ENCODE measurements at regions of chr9 and their contacts with region 1.

Region 1: GRCh38 chr9:131627648-131628458 is 82.5 kb downstream of the PRRT1B start:
- DNase-seq: peak; percentile 73 to 92
- ATAC-seq: peak; percentile 82 to 88 (median 83)
- H3K4me3 ChIP-seq: peak overlapping the region; percentile 13
- H3K4me3 Mint-ChIP-seq: peak overlapping the region; percentile 75
- H3K27ac ChIP-seq: peak overlapping the region; percentile 97
- H3K27ac Mint-ChIP-seq: peak overlapping the region; percentile 95 to 98
- H3K4me1 ChIP-seq: peaks cover 85% of the 10 kb centered on the region
- H3K4me1 Mint-ChIP-seq: peaks cover 36 to 61% of the 10 kb centered on the region in 2 donors
- H3K27me3 ChIP-seq: no peaks in the 10 kb centered on the region
- H3K27me3 Mint-ChIP-seq: no peaks in the 10 kb centered on the region
- CTCF ChIP-seq: no peak

Region 2: GRCh38 chr9:131585375-131585774 is 42.5 kb before region 1 on chr9:
- intact Hi-C with region 1: loop called (anchors 1 kb)
- DNase-seq: peak; percentile 44 to 84
- ATAC-seq: peak; percentile 87 to 88 (median 87)
- H3K4me3 ChIP-seq: no peak overlapping the region
- H3K4me3 Mint-ChIP-seq: peak overlapping the region; percentile 82
- H3K27ac ChIP-seq: peak overlapping the region; percentile 58
- H3K27ac Mint-ChIP-seq: peak overlapping the region; percentile 90
- H3K4me1 ChIP-seq: peaks cover 47% of the 10 kb centered on the region
- H3K4me1 Mint-ChIP-seq: peaks cover 40 to 59% of the 10 kb centered on the region in 2 donors
- H3K27me3 ChIP-seq: no peaks in the 10 kb centered on the region
- H3K27me3 Mint-ChIP-seq: no peaks in the 10 kb centered on the region
- CTCF ChIP-seq: no peak

Region 3: GRCh38 chr9:131645078-131645776 is 17.4 kb after region 1 on chr9:
- intact Hi-C with region 1: loop called (anchors 1 kb)
- DNase-seq: peak; percentile 42 to 47
- ATAC-seq: peak; percentile 83 to 87 (median 86)
- H3K4me3 ChIP-seq: no peak overlapping the region
- H3K4me3 Mint-ChIP-seq: peak overlapping the region; percentile 61
- H3K27ac ChIP-seq: peak overlapping the region; percentile 30
- H3K27ac Mint-ChIP-seq: peak overlapping the region; percentile 82 to 91
- H3K4me1 ChIP-seq: peaks cover 31% of the 10 kb centered on the region
- H3K4me1 Mint-ChIP-seq: peaks cover 44 to 52% of the 10 kb centered on the region in 2 donors
- H3K27me3 ChIP-seq: no peaks in the 10 kb centered on the region
- H3K27me3 Mint-ChIP-seq: no peaks in the 10 kb centered on the region
- CTCF ChIP-seq: no peak

Region 4: GRCh38 chr9:131668439-131669268 is 40.8 kb after region 1 on chr9:
- intact Hi-C with region 1: loop called (anchors 1 kb)
- DNase-seq: peak; percentile 72 to 85
- ATAC-seq: peak; percentile 67 to 77 (median 72)
- H3K4me3 ChIP-seq: no peak overlapping the region
- H3K4me3 Mint-ChIP-seq: peak overlapping the region; percentile 66
- H3K27ac ChIP-seq: peak overlapping the region; percentile 92
- H3K27ac Mint-ChIP-seq: peak overlapping the region; percentile 98 to 99
- H3K4me1 ChIP-seq: peaks cover 84% of the 10 kb centered on the region
- H3K4me1 Mint-ChIP-seq: peaks cover 89 to 90% of the 10 kb centered on the region in 2 donors
- H3K27me3 ChIP-seq: no peaks in the 10 kb centered on the region
- H3K27me3 Mint-ChIP-seq: no peaks in the 10 kb centered on the region
- CTCF ChIP-seq: no peak

Region 5: GRCh38 chr9:131678499-131679111 is 50.8 kb after region 1 on chr9:
- intact Hi-C with region 1: loop called (anchors 2 kb)
- DNase-seq: peak; percentile 75 to 83
- ATAC-seq: peak; percentile 93 to 97 (median 97)
- H3K4me3 ChIP-seq: no peak overlapping the region
- H3K4me3 Mint-ChIP-seq: peak overlapping the region; percentile 86
- H3K27ac ChIP-seq: peak overlapping the region; percentile 89
- H3K27ac Mint-ChIP-seq: peak overlapping the region; percentile 99 to 100
- H3K4me1 ChIP-seq: peaks cover 54% of the 10 kb centered on the region
- H3K4me1 Mint-ChIP-seq: peaks cover 83 to 93% of the 10 kb centered on the region in 2 donors
- H3K27me3 ChIP-seq: no peaks in the 10 kb centered on the region
- H3K27me3 Mint-ChIP-seq: no peaks in the 10 kb centered on the region
- CTCF ChIP-seq: no peak

Region 6: DNA sequence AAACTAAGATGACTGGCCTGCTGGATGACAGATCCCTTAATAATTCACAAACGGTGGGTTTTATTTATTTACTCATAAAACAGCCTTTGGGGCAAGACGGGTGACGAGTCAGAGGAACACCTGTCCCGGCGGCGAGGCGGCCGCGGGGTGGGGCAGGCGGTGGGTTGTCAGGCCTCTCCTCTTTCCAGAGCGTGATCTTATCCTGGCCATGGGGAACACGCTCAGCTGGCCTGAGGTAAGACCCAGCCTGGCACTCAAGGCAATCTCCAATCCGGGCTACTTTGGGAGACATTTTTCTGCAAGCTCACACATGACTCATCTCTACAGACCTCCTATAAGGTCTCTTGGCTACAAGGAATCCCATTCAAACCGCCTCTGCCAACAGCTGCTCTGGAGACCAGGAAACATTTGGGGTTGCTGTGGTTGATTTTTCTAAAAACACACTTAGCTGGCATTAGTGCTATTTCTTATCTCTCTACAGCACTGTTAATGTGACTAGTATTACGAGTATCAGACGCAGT is 105.7 kb after region 1 on chr9:
- intact Hi-C with region 1: loop called (anchors 2 kb)
- DNase-seq: peak; percentile 52 to 75
- ATAC-seq: peak in 2 of 3 donors; percentile 6 to 21
- H3K4me3 ChIP-seq: peak overlapping the region; percentile 4
- H3K4me3 Mint-ChIP-seq: peak overlapping the region; percentile 82
- H3K27ac ChIP-seq: peak overlapping the region; percentile 93
- H3K27ac Mint-ChIP-seq: peak overlapping the region; percentile 92 to 95
- H3K4me1 ChIP-seq: peaks cover 99% of the 10 kb centered on the region
- H3K4me1 Mint-ChIP-seq: peaks cover 84 to 87% of the 10 kb centered on the region in 2 donors
- H3K27me3 ChIP-seq: no peaks in the 10 kb centered on the region
- H3K27me3 Mint-ChIP-seq: no peaks in the 10 kb centered on the region
- CTCF ChIP-seq: no peak

Region 7: GRCh38 chr9:131762356-131762932 is 134.6 kb after region 1 on chr9:
- intact Hi-C with region 1: no loop called
- DNase-seq: peak; percentile 77 to 88
- ATAC-seq: peak; percentile 89 to 99 (median 99)
- H3K4me3 ChIP-seq: no peak overlapping the region
- H3K4me3 Mint-ChIP-seq: no peak overlapping the region
- H3K27ac ChIP-seq: no peak overlapping the region
- H3K27ac Mint-ChIP-seq: no peak overlapping the region
- H3K4me1 ChIP-seq: peaks cover 7% of the 10 kb centered on the region
- H3K4me1 Mint-ChIP-seq: peaks cover 0 to 6% of the 10 kb centered on the region in 2 donors
- H3K27me3 ChIP-seq: no peaks in the 10 kb centered on the region
- H3K27me3 Mint-ChIP-seq: peaks cover 14 to 26% of the 10 kb centered on the region in 2 donors
- CTCF ChIP-seq: peak; percentile 98

Region 8: DNA sequence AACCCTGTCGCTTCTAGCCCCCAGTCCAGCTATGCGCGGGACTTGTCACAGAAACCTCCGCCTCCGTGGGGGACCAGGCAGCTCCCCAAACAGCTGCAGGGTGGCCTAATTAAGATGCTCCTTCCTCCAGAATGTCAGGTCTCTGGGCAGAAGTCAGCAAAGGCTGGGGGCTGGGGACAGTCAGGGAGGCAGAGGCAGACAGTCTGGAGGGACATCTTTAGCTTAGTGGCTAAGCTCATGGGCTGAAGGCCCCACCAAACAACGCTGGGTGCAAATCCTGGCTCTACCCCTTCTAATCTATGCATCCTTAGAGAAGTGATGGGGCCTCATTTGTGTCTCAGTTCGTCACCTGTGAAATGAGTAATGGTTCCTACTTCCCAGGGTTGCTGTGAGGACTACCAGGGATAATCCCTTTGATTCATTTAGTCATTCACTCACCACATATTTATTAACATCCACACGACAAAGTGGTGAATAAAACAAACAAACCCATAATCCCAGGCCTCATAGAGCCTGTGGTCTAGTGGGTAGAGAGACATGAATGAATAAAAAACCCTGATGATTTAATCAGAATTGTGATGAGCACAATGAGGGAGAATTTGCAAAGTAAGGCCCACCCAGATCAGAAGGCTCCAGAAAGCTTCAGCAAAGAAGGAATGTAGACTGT is 472.0 kb after region 1 on chr9:
- intact Hi-C with region 1: no loop called
- DNase-seq: no peak
- ATAC-seq: no peak
- H3K4me3 ChIP-seq: no peak overlapping the region
- H3K4me3 Mint-ChIP-seq: no peak overlapping the region
- H3K27ac ChIP-seq: no peak overlapping the region
- H3K27ac Mint-ChIP-seq: no peak overlapping the region
- H3K4me1 ChIP-seq: no peaks in the 10 kb centered on the region
- H3K4me1 Mint-ChIP-seq: no peaks in the 10 kb centered on the region
- H3K27me3 ChIP-seq: peaks cover 3% of the 10 kb centered on the region
- H3K27me3 Mint-ChIP-seq: peaks cover 26 to 31% of the 10 kb centered on the region in 2 donors
- CTCF ChIP-seq: no peak